Heart left ventricle (tissue), 16 donors: ENCODE measurements at regions of chr17 and their contacts with region 1.

Region 1: GRCh38 chr17:34711646-34712045 is 132.3 kb downstream of the TMEM132E start:
- DNase-seq: no peak
- ATAC-seq: no peak
- H3K4me3 ChIP-seq: no peak overlapping the region
- H3K27ac ChIP-seq: no peak overlapping the region
- H3K4me1 ChIP-seq: no peaks in the 10 kb centered on the region
- H3K27me3 ChIP-seq: peaks cover 0 to 17% (median 0%) of the 10 kb centered on the region in 9 donors
- CTCF ChIP-seq: no peak
- POLR2A ChIP-seq: no peak

Region 2: DNA sequence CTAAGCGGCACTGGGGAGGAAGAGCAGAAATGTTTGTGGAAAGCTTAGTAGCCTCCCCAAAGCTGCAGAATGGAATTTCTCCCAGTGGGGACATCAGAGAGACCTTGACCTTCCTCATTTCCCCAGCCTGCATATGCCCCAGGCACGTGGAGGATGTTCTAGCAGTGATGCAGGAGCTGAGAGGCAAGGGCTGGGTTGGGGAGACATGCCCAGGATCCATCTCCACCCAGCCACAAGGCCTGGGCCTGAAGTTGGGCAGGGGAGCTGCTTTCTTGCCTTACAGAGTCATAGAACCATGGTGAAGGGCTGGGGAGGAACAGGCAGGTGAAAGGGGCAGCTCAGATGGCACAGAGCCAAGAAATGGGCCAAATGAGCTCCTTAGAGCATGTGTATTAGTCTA is 28.3 kb before region 1 on chr17:
- intact Hi-C with region 1: loop called in 1 of 10 experiments (anchors 2 kb)
- DNase-seq: no peak
- ATAC-seq: no peak
- H3K4me3 ChIP-seq: no peak overlapping the region
- H3K27ac ChIP-seq: no peak overlapping the region
- H3K4me1 ChIP-seq: no peaks in the 10 kb centered on the region
- H3K27me3 ChIP-seq: peaks cover 0 to 11% (median 0%) of the 10 kb centered on the region in 9 donors
- CTCF ChIP-seq: no peak
- POLR2A ChIP-seq: no peak